Calu3 (cell line): ENCODE measurements at regions of chr5 and their contacts with region 1.

Region 1: DNA sequence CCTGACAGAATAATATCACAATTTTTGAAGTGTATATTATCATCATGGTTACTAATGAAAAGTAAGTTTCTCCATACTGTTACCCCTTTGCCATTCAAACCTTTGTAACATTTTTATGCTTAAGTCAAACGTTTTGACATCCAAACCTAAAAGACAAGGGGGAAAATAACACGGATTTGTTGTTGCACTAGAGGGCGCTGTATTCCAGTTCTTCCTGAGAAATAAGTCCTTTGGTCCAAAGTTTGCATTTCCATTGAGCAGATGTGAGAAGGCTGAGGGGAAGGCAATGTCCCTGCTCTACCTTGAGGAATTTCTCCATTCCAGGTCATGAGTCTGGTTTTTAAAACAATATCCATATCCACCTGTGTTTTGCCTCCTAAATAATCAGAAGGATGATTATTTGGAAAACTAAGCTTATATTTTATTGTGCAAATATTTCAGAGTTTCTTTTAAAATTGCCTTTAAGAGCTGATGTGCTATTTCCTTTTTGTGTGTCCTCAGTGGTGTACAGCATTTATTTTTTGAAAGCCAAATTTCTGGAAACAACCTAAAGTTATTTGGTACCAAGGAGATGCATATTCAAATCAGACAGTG is 9.7 kb downstream of the LECT2 start:
- DNase-seq: peak; percentile 66
- H3K4me3 Mint-ChIP-seq: no peak overlapping the region
- H3K27ac Mint-ChIP-seq: no peak overlapping the region
- H3K4me1 Mint-ChIP-seq: no peaks in the 10 kb centered on the region
- H3K27me3 Mint-ChIP-seq: no peaks in the 10 kb centered on the region
- CTCF ChIP-seq: peak; percentile 76

Region 2: DNA sequence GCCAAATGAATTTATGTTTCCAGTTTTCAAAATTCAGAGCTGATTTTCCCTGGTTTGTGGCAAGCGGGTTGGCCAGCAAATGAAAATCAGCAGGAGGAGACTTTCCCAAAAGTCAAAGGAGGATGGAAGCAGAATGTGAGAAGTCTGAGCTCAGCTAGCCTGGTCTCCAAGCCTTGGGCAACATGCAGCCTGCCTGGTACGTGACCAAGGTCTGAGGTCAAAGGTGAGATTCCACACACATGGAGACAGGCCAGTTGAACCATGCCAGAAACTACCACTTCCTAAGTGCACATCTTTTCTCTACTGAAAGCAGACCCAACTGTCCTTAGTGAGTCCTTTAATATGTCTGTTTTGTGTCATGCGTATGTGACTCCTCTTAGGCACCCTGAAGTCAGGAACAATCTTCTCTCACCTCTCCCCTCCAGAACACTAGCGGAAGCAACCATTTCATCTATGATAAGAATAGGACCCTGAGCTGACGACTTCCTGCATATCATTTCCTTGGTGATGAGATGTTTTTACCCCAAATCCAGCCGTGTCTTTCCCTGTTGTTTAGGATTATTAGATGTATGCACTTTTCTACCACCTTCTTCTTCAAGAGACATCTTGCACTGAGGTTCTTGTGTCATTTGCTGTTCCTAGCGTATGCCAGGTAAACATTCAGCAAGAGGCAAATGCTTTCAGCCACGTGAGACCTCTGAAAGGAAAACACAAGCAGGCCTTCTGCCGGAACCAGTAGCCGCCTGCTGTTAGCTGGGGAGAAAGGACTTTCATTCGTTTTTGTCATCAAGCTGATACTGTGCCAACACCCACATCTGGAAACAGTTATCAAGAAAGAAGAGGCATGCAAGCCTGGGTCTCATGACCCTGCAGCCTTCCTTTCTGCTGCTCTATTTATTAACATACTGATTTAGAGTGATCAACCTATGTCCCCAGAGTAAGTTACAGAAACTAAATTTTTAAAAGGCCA is 74.0 kb after region 1 on chr5:
- CTCF ChIA-PET with region 1: interaction called, 3 read pairs
- intact Hi-C with region 1: loop called (anchors 5 kb)
- DNase-seq: no peak
- H3K4me3 Mint-ChIP-seq: no peak overlapping the region
- H3K27ac Mint-ChIP-seq: peak overlapping the region; percentile 88
- H3K4me1 Mint-ChIP-seq: peaks cover 86% of the 10 kb centered on the region
- H3K27me3 Mint-ChIP-seq: no peaks in the 10 kb centered on the region
- CTCF ChIP-seq: no peak

Region 3: GRCh38 chr5:136062366-136063274 is 117.6 kb after region 1 on chr5:
- CTCF ChIA-PET with region 1: interaction called, 9 read pairs
- intact Hi-C with region 1: loop called (anchors 1 kb)
- DNase-seq: peak; percentile 55
- H3K4me3 Mint-ChIP-seq: no peak overlapping the region
- H3K27ac Mint-ChIP-seq: no peak overlapping the region
- H3K4me1 Mint-ChIP-seq: peaks cover 28% of the 10 kb centered on the region
- H3K27me3 Mint-ChIP-seq: no peaks in the 10 kb centered on the region
- CTCF ChIP-seq: peak; percentile 34

Region 4: DNA sequence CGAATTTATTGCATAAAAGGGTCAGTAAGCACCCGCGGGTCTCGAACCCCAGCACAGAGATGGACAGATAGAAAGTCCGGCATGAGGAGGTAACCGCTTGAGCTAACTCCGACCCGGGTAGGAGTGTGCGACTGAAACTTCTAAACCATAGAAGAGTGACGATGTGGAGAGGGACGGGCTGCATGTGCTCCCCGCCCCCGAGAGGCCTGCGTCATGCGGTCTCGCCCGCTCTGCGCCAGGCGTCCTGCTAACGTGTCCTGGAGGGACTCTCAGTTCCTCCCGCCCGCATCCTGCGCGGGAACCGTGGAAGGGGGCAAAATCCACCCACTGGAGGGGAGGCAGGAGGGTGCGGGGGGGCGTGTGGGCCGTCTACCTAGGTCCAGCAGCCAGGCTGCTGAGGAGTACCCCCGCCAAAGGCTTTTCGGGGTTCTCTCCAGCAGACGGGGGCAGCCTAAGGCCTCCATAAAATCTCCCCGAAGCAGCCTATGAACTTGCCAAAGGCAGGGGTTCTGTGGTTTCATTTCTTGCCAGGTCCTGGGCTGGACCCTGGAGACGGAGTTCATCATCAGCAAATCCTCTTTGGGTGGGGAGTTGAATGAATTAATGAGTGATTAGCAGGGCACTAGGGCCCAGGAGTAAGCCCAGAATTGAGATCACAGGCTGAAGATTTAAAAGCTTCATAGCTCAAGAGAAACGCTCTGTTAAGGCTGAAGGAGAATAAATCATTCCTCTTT is 135.6 kb after region 1 on chr5:
- CTCF ChIA-PET with region 1: interaction called, 4 read pairs
- intact Hi-C with region 1: loop called (anchors 1 kb)
- DNase-seq: peak; percentile 95
- H3K4me3 Mint-ChIP-seq: peak overlapping the region; percentile 71
- H3K27ac Mint-ChIP-seq: peak overlapping the region; percentile 99
- H3K4me1 Mint-ChIP-seq: no peaks in the 10 kb centered on the region
- H3K27me3 Mint-ChIP-seq: no peaks in the 10 kb centered on the region
- CTCF ChIP-seq: no peak

Region 5: GRCh38 chr5:136174021-136174659 is 229.1 kb after region 1 on chr5:
- CTCF ChIA-PET with region 1: no interaction called
- intact Hi-C with region 1: loop called (anchors 1 kb)
- DNase-seq: no peak
- H3K4me3 Mint-ChIP-seq: no peak overlapping the region
- H3K27ac Mint-ChIP-seq: no peak overlapping the region
- H3K4me1 Mint-ChIP-seq: no peaks in the 10 kb centered on the region
- H3K27me3 Mint-ChIP-seq: no peaks in the 10 kb centered on the region
- CTCF ChIP-seq: peak; percentile 58

Region 6: GRCh38 chr5:136212252-136212721 is 267.2 kb after region 1 on chr5:
- CTCF ChIA-PET with region 1: no interaction called
- intact Hi-C with region 1: loop called (anchors 5 kb)
- DNase-seq: peak; percentile 73
- H3K4me3 Mint-ChIP-seq: no peak overlapping the region
- H3K27ac Mint-ChIP-seq: no peak overlapping the region
- H3K4me1 Mint-ChIP-seq: no peaks in the 10 kb centered on the region
- H3K27me3 Mint-ChIP-seq: no peaks in the 10 kb centered on the region
- CTCF ChIP-seq: peak; percentile 96

Region 7: GRCh38 chr5:136364307-136364706 is 419.2 kb after region 1 on chr5:
- CTCF ChIA-PET with region 1: no interaction called
- intact Hi-C with region 1: no loop called
- DNase-seq: peak; percentile 31
- H3K4me3 Mint-ChIP-seq: no peak overlapping the region
- H3K27ac Mint-ChIP-seq: no peak overlapping the region
- H3K4me1 Mint-ChIP-seq: no peaks in the 10 kb centered on the region
- H3K27me3 Mint-ChIP-seq: peaks cover 39% of the 10 kb centered on the region
- CTCF ChIP-seq: peak; percentile 69